IMR-90 (cell line): ENCODE measurements at regions of chr9 and their contacts with region 1.

Region 1: GRCh38 chr9:76810377-76810957 is 46.2 kb downstream of the PCA3 start:
- DNase-seq: peak; percentile 72
- ATAC-seq: peak; percentile 91
- H3K4me3 ChIP-seq: no peak overlapping the region
- H3K27ac ChIP-seq: no peak overlapping the region
- H3K4me1 ChIP-seq: no peaks in the 10 kb centered on the region
- H3K27me3 ChIP-seq: no peaks in the 10 kb centered on the region; the same call in 1 of the 2 replicates
- CTCF ChIP-seq: peak; percentile 86
- POLR2A ChIP-seq: no peak
- RAD21 ChIP-seq: peak; percentile 97

Region 2: DNA sequence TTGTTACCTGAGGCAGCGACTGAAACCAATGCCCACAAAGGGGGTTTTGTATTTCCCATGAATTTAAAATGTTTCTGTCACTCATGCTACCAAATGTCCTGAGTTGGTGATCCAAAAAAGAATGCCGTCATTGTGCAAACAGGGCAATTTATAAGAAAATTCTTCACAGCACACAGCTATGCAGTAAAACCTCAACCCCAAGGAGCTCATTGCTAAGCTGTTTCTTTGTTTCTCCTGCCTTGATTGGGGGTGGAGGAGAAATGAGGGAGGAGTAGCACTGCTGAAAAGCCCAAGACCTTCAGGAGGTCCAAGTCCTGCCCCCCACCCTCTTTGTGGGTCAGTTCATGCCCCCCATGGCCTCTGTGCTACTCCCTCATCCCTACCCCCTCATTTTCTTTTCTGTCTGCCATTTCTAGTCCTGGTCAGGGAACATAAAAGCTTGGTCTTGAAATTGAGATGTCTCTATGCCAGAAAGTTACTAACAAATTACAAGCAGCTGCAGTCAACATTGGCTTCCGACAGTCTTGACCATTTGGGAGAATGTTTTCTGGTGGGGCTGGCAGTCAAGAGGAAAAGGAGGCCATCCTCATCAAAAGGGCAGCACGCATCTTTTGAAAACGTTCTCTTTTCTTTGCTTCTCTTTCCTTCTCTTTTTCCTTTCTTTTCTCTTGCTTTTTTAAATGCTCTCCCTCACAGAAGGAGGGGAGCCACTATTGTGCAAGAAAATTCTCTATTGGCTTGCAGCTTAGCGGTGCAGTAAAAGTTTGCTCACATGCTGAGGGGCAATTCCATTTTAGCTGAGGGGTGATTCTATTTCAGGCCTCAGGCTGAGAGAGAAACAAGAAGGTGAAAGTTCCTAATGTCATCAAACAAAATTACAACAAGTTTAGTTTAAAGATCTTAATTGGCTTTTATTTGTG is 218.1 kb before region 1 on chr9:
- CTCF ChIA-PET with region 1: no interaction called
- POLR2A ChIA-PET with region 1: no interaction called
- dilution Hi-C with region 1: no loop called
- in situ Hi-C with region 1: no loop called
- intact Hi-C with region 1: no loop called
- DNase-seq: no peak
- ATAC-seq: no peak
- H3K4me3 ChIP-seq: no peak overlapping the region
- H3K27ac ChIP-seq: no peak overlapping the region
- H3K4me1 ChIP-seq: no peaks in the 10 kb centered on the region
- H3K27me3 ChIP-seq: peaks cover 3% of the 10 kb centered on the region
- CTCF ChIP-seq: no peak
- POLR2A ChIP-seq: no peak
- RAD21 ChIP-seq: no peak

Region 3: GRCh38 chr9:76969716-76970115 is 159.2 kb after region 1 on chr9:
- CTCF ChIA-PET with region 1: interaction called, 10 read pairs
- POLR2A ChIA-PET with region 1: no interaction called
- dilution Hi-C with region 1: no loop called
- in situ Hi-C with region 1: no loop called
- intact Hi-C with region 1: no loop called
- DNase-seq: no peak
- ATAC-seq: no peak
- H3K4me3 ChIP-seq: no peak overlapping the region
- H3K27ac ChIP-seq: no peak overlapping the region
- H3K4me1 ChIP-seq: no peaks in the 10 kb centered on the region
- H3K27me3 ChIP-seq: no peaks in the 10 kb centered on the region; the same call in 1 of the 2 replicates
- CTCF ChIP-seq: no peak
- POLR2A ChIP-seq: no peak
- RAD21 ChIP-seq: no peak

Region 4: GRCh38 chr9:76987594-76988200 is 177.2 kb after region 1 on chr9:
- CTCF ChIA-PET with region 1: interaction called, 17 read pairs
- POLR2A ChIA-PET with region 1: interaction called, 4 read pairs
- dilution Hi-C with region 1: loop called (anchors 25 kb)
- in situ Hi-C with region 1: loop called (anchors 5 kb)
- intact Hi-C with region 1: loop called (anchors 1 kb)
- DNase-seq: peak; percentile 44
- ATAC-seq: peak; percentile 91
- H3K4me3 ChIP-seq: no peak overlapping the region
- H3K27ac ChIP-seq: no peak overlapping the region
- H3K4me1 ChIP-seq: no peaks in the 10 kb centered on the region
- H3K27me3 ChIP-seq: peaks cover 4% of the 10 kb centered on the region
- CTCF ChIP-seq: peak; percentile 73
- POLR2A ChIP-seq: no peak
- RAD21 ChIP-seq: peak; percentile 80

Region 5: GRCh38 chr9:77011973-77012821 is 201.7 kb after region 1 on chr9:
- CTCF ChIA-PET with region 1: interaction called, 3 read pairs
- POLR2A ChIA-PET with region 1: no interaction called
- dilution Hi-C with region 1: no loop called
- in situ Hi-C with region 1: no loop called
- intact Hi-C with region 1: loop called (anchors 1 kb)
- DNase-seq: peak; percentile 29
- ATAC-seq: peak; percentile 85
- H3K4me3 ChIP-seq: no peak overlapping the region
- H3K27ac ChIP-seq: no peak overlapping the region
- H3K4me1 ChIP-seq: no peaks in the 10 kb centered on the region
- H3K27me3 ChIP-seq: peaks cover 59% of the 10 kb centered on the region
- CTCF ChIP-seq: peak; percentile 69
- POLR2A ChIP-seq: no peak
- RAD21 ChIP-seq: peak; percentile 57

Region 6: GRCh38 chr9:77163884-77164283 is 353.4 kb after region 1 on chr9:
- CTCF ChIA-PET with region 1: no interaction called
- POLR2A ChIA-PET with region 1: no interaction called
- dilution Hi-C with region 1: no loop called
- in situ Hi-C with region 1: loop called (anchors 25 kb)
- intact Hi-C with region 1: no loop called
- DNase-seq: peak; percentile 58
- ATAC-seq: peak; percentile 72
- H3K4me3 ChIP-seq: no peak overlapping the region
- H3K27ac ChIP-seq: no peak overlapping the region
- H3K4me1 ChIP-seq: peaks cover 4% of the 10 kb centered on the region; the same call in 1 of the 2 replicates
- H3K27me3 ChIP-seq: no peaks in the 10 kb centered on the region; the same call in 1 of the 2 replicates
- CTCF ChIP-seq: no peak
- POLR2A ChIP-seq: no peak
- RAD21 ChIP-seq: no peak